Activated T-helper 1 cell treated with anti-CD3 and anti-CD28 coated beads, Interleukin-12 subunit alpha, Interleukin-12 subunit beta, Interleukin-2, Interleukin-4 antibody, amounts not matched to agents 30 ng/mL and 10 ng/mL and 1 ng/mL, durations not matched to agents 14 hours and 24 hours and 36 hours (primary cell): ENCODE measurements at regions of chr10 and their contacts with region 1.

Region 1: GRCh38 chr10:74151056-74151878 is at the start of gene ADK:
- DNase-seq: peak; percentile 99
- H3K4me3 Mint-ChIP-seq: no peak within 1 kb of the TSS
- H3K27ac Mint-ChIP-seq: peak within 1 kb of the TSS; percentile 69
- H3K4me1 Mint-ChIP-seq: peaks cover 29% of the 10 kb centered on the region
- H3K27me3 Mint-ChIP-seq: no peaks in the 10 kb centered on the region
- total RNA-seq, gene ADK: 47.4 and 50.8 TPM in 2 replicates

Region 2: GRCh38 chr10:72542396-72542815 is 1608.9 kb before region 1 on chr10:
- intact Hi-C with region 1: no loop called
- DNase-seq: no peak
- H3K4me3 Mint-ChIP-seq: no peak overlapping the region
- H3K27ac Mint-ChIP-seq: no peak overlapping the region
- H3K4me1 Mint-ChIP-seq: peaks cover 18% of the 10 kb centered on the region
- H3K27me3 Mint-ChIP-seq: no peaks in the 10 kb centered on the region

Region 3: GRCh38 chr10:73743905-73744663 is 407.2 kb before region 1 on chr10 and contains the start of gene SEC24C:
- intact Hi-C with region 1: loop called (anchors 1 kb)
- DNase-seq: peak; percentile 93
- H3K4me3 Mint-ChIP-seq: peak within 1 kb of the TSS; percentile 97
- H3K27ac Mint-ChIP-seq: peak within 1 kb of the TSS; percentile 98
- H3K4me1 Mint-ChIP-seq: peaks cover 32% of the 10 kb centered on the region
- H3K27me3 Mint-ChIP-seq: no peaks in the 10 kb centered on the region
- total RNA-seq, gene SEC24C: 112 and 114 TPM in 2 replicates

Region 4: GRCh38 chr10:73997787-73998622 is 153.3 kb before region 1 on chr10 and contains the start of gene VCL:
- intact Hi-C with region 1: loop called (anchors 1 kb)
- DNase-seq: peak; percentile 95
- H3K4me3 Mint-ChIP-seq: peak within 1 kb of the TSS; percentile 98
- H3K27ac Mint-ChIP-seq: peak within 1 kb of the TSS; percentile 100
- H3K4me1 Mint-ChIP-seq: peaks cover 59% of the 10 kb centered on the region
- H3K27me3 Mint-ChIP-seq: no peaks in the 10 kb centered on the region
- total RNA-seq, gene VCL: 24.4 and 26.0 TPM in 2 replicates

Region 5: DNA sequence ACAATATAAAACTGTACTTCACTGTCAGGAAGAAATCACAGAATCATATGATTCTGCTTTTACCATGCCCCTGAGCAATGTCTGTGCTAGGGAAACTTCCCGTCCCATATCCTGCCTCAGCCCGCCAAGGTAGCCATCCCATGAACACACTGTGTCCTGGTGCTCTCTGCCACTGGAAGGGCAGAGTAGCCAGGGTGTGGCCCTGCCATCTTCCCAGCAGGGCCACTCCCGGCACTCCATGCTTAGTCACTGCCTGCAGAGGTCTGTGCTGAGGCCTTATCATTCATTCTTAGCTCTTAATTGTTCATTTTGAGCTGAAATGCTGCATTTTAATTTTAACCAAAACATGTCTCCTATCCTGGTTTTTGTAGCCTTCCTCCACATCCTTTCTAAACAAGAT is 32.5 kb before region 1 on chr10:
- intact Hi-C with region 1: no loop called
- DNase-seq: no peak
- H3K4me3 Mint-ChIP-seq: no peak overlapping the region
- H3K27ac Mint-ChIP-seq: peak overlapping the region; percentile 62
- H3K4me1 Mint-ChIP-seq: peaks cover 34% of the 10 kb centered on the region
- H3K27me3 Mint-ChIP-seq: no peaks in the 10 kb centered on the region

Region 6: DNA sequence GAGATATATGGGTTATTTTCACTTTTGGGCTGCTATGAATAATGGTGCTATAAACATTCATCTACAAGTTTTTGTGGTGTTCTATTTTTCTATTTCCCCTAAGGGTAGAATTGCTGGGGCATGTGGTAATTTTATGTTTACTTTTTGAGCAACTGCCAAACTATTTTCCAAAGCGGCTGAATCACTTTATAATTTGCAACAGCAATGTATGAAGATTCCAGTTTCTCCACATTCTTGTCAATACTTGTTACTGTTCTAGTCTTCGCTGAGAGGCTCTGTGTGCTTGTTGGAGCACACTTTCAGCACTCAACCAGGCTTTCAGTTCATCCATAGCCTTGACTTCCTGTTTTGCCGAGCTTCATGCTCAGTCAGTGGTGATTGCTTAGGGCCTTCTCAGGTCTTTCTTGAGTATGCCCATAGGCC is 38.7 kb after region 1 on chr10:
- intact Hi-C with region 1: loop called (anchors 5 kb)
- DNase-seq: peak; percentile 9
- H3K4me3 Mint-ChIP-seq: peak overlapping the region; percentile 58
- H3K27ac Mint-ChIP-seq: peak overlapping the region; percentile 72
- H3K4me1 Mint-ChIP-seq: peaks cover 47% of the 10 kb centered on the region
- H3K27me3 Mint-ChIP-seq: no peaks in the 10 kb centered on the region

Region 7: GRCh38 chr10:74234569-74234968 is 83.3 kb after region 1 on chr10:
- intact Hi-C with region 1: loop called (anchors 1 kb)
- DNase-seq: no peak
- H3K4me3 Mint-ChIP-seq: no peak overlapping the region
- H3K27ac Mint-ChIP-seq: no peak overlapping the region
- H3K4me1 Mint-ChIP-seq: peaks cover 17% of the 10 kb centered on the region
- H3K27me3 Mint-ChIP-seq: no peaks in the 10 kb centered on the region

Region 8: DNA sequence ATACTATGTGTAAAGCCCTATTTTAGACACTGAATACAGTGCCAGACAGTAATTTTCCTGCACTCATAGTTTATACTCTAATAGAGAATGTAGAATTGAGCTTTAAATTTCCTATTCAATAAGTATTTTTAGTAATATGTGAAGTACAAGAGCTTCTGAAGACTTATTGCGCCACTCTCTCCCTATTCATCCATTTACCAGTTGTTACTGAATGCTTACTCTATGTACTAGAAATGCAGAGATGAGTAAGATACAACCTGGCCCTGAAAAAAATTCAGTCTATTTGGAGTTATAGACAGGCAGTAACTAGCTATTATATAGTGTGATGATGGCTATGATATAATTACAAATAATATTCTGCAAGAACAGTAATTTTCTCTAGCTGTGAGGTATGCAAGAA is 98.6 kb after region 1 on chr10:
- intact Hi-C with region 1: no loop called
- DNase-seq: no peak
- H3K4me3 Mint-ChIP-seq: no peak overlapping the region
- H3K27ac Mint-ChIP-seq: no peak overlapping the region
- H3K4me1 Mint-ChIP-seq: no peaks in the 10 kb centered on the region
- H3K27me3 Mint-ChIP-seq: no peaks in the 10 kb centered on the region

Region 9: GRCh38 chr10:75111367-75111906 is 960.2 kb after region 1 on chr10 and contains the start of gene SAMD8:
- intact Hi-C with region 1: loop called (anchors 2 kb)
- DNase-seq: peak; percentile 97
- H3K4me3 Mint-ChIP-seq: peak within 1 kb of the TSS; percentile 95
- H3K27ac Mint-ChIP-seq: peak within 1 kb of the TSS; percentile 99
- H3K4me1 Mint-ChIP-seq: peaks cover 50% of the 10 kb centered on the region
- H3K27me3 Mint-ChIP-seq: no peaks in the 10 kb centered on the region
- total RNA-seq, gene SAMD8: 16.2 and 16.5 TPM in 2 replicates

Region 10: GRCh38 chr10:75235375-75236177 is 1084.3 kb after region 1 on chr10 and contains the start of gene COMTD1:
- intact Hi-C with region 1: loop called (anchors 1 kb)
- DNase-seq: peak; percentile 91
- H3K4me3 Mint-ChIP-seq: peak within 1 kb of the TSS; percentile 84
- H3K27ac Mint-ChIP-seq: peak within 1 kb of the TSS; percentile 93
- H3K4me1 Mint-ChIP-seq: peaks cover 27% of the 10 kb centered on the region
- H3K27me3 Mint-ChIP-seq: no peaks in the 10 kb centered on the region
- total RNA-seq, gene COMTD1: 36.4 and 36.9 TPM in 2 replicates